ENCODE measurements at regions of chr5 and their contacts with region 1.

Region 1: DNA sequence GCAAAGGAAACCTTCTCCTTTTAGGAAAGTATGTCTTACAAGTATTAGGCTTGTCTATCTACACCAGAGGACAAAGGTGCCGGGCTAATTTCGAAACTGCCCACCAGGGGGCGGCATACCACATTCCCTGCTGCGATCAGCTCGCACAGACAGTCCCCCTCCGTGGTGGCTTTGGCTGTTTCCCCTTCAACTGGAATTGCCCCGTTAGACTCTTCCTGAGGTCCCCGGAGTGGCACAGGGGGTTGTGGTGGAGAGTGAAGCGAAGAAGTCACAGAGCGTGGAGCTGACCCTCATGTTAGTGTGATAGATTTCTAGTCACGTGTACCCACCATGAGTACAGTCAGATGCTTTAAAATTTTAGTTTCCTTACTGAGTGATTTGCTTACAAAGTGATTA is 17.5 kb downstream of the PTTG1 start:
- DNase-seq: peak; percentile 93
- ATAC-seq: peak; percentile 84
- H3K4me3 Mint-ChIP-seq: peak overlapping the region; percentile 66
- H3K27ac Mint-ChIP-seq: no peak overlapping the region
- H3K4me1 Mint-ChIP-seq: peaks cover 15% of the 10 kb centered on the region
- H3K27me3 Mint-ChIP-seq: no peaks in the 10 kb centered on the region
- CTCF ChIP-seq: peak; percentile 95

Region 2: DNA sequence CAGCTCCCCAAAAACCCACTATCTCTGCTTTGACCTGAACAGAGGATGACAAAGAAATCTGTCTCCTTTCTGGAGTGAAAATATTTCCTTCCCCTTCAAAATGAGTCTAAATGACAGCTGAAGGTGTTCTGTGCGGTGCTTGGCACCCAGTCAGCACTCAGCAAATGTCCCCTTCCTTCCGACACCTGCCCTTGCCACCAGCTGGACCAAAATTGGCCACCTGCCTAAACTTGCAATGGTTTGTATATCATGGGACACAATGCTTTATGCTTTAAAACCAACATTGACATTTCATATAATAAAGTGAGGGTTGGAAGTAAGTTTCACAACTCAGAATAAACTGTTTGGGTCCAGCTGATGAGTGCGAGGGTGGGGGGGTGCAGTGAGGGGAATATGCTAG is 437.7 kb before region 1 on chr5:
- CTCF ChIA-PET with region 1: no interaction called
- POLR2A ChIA-PET with region 1: no interaction called
- DNase-seq: no peak
- ATAC-seq: no peak
- H3K4me3 Mint-ChIP-seq: no peak overlapping the region
- H3K27ac Mint-ChIP-seq: 0 out of 2 replicates have a peak overlapping the region, but pooled peaks have one; percentile 52
- H3K4me1 Mint-ChIP-seq: no peaks in the 10 kb centered on the region
- H3K27me3 Mint-ChIP-seq: 0 out of 2 replicates have a peak, but pooled peaks cover 3% of the 10 kb centered on the region
- CTCF ChIP-seq: no peak

Region 3: DNA sequence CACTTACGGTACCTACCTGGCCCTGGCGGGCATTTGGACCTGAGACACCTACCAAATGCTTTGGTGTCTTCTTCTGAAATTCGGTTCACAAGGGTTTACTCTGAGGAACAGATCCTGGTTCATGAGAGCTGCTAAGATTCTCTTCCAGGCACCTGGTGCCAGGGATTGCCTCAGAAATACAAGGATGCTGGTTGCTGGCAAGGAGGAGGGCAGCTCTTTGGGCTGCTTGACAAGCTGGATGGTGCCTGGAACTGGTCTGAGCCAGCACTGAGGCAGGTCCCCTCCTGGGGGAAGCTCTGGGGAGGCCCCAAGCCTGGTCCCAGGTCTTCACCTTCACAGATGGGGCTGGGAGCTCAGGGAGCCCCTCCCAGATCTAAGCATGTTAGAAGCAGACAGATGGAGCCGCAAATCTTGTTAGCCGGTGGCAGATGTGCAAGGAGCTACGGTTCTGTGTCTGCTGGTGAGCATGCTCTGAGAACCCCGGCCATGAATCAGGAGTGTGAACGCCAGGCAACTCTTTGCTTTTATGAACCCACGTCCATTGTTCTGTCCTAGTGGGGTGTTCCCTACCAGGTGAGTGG is 193.6 kb before region 1 on chr5:
- CTCF ChIA-PET with region 1: no interaction called
- POLR2A ChIA-PET with region 1: no interaction called
- DNase-seq: no peak
- ATAC-seq: 0 out of 2 replicates have a peak, but pooled peaks have one; percentile 8
- H3K4me3 Mint-ChIP-seq: no peak overlapping the region
- H3K27ac Mint-ChIP-seq: no peak overlapping the region
- H3K4me1 Mint-ChIP-seq: peaks cover 11% of the 10 kb centered on the region
- H3K27me3 Mint-ChIP-seq: no peaks in the 10 kb centered on the region
- CTCF ChIP-seq: no peak

Region 4: DNA sequence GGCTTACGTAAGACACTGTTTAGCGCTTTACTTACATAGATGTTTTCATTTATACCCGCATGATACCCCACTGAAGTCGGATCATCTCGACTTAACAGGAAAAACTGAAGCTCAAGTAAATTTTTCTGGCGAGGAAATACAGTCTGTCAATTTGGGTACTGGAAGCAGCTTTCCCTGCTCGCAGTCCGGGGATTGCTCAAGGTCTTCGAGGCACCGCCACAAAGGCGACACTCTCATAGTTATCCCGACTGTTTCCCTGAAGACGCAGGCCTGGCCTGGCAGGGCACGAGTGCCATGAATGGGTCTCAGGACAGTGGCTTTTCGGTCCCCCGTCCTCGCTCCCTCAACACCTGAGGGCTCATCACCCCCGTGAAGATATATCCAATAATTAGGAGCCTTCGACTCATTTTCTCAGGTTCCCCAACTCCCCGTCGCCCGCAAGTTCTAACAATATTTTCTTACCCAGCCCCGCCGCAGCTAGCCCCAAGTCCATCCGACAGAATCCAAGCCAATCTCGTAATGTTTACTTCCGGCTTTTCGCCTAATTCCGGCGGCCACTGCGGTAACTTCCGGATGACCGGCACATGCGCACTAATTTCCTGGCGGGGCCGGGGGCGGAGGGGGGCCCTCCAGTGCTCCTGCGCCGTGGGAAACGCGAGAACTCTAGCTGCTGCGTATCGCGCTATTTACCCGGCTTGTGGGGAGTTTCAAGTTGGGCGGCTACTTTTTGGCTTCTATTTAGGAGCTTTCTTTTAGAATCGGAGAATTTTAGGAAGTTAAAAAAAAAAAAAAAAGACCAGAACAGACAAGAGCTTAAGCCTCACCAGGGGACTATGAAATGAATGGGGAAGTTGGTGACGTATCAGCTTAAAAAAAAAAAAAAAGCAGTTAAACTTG is 20.4 kb before region 1 on chr5 and contains the start of gene SLU7:
- CTCF ChIA-PET with region 1: interaction called, 26 read pairs
- POLR2A ChIA-PET with region 1: interaction called, 3 read pairs
- DNase-seq: peak; percentile 94
- ATAC-seq: peak; percentile 80
- H3K4me3 Mint-ChIP-seq: peak within 1 kb of the TSS; percentile 98
- H3K27ac Mint-ChIP-seq: peak within 1 kb of the TSS; percentile 96
- H3K4me1 Mint-ChIP-seq: peaks cover 42% of the 10 kb centered on the region
- H3K27me3 Mint-ChIP-seq: no peaks in the 10 kb centered on the region
- CTCF ChIP-seq: no peak
- total RNA-seq, gene SLU7: 28.7 to 33.3 TPM (median 32.5 TPM) in 3 replicates

Region 5: DNA sequence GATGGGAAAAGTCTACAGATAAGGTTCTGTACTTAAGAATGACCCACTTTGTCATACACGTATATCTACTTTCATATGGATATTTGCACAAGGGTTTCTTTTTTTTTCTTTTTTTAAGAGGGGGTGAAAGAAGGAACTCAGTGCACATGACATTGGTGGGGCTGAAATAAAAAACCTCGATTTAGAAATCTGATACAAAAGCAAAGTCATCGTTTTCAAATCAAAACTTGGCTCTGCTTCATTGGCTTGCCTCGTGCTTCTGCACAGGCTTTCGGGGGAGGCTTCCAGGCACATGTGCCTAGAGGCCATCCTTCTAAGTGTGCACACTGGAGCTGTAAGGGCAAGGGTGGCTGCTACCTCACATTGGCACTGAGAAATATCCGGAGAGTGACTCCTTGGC is 13.6 kb after region 1 on chr5:
- CTCF ChIA-PET with region 1: interaction called, 18 read pairs
- POLR2A ChIA-PET with region 1: no interaction called
- DNase-seq: no peak
- ATAC-seq: no peak
- H3K4me3 Mint-ChIP-seq: no peak overlapping the region
- H3K27ac Mint-ChIP-seq: no peak overlapping the region
- H3K4me1 Mint-ChIP-seq: no peaks in the 10 kb centered on the region
- H3K27me3 Mint-ChIP-seq: no peaks in the 10 kb centered on the region; the same call in 1 of the 2 replicates
- CTCF ChIP-seq: no peak

Region 6: DNA sequence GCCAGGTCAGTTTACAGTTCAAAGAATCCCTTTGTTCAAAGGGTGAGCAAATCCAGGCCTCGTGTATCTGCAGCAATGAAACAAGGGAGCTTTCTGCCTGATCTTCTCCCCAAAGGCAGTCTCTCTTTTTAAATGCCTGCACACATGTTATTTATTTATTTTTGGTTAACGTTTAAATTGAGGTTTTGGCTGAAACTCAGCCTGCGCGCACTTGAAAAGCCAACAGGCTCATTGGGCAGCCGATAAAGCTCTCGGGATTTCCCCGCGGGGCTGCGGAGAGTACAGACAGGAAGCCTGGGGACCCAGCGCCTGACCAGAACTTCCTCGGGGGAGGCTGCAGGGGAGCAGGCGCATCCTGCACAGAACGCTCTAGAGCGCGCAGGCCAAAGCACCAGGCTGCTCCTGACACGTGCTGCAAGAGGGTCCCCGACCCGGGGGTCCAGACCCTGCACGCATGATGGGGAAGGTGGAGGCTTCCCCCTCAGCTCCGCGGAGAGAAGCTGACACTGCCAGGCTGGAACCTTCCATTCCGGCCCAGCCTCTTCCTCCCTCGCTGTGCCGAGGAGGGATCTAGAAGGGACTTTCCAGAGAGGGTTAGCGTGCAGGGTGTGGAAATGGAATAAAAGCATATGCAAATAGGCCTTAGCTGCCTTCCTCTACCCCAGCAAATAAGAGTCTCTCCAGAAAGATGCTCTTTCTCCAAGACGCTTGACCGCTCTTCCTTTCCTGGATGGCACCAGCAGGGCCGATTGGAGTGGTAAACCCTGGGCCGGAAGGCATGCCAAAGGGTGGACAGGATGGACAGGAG is 28.6 kb after region 1 on chr5:
- CTCF ChIA-PET with region 1: interaction called, 28 read pairs
- POLR2A ChIA-PET with region 1: no interaction called
- DNase-seq: peak; percentile 57
- ATAC-seq: peak; percentile 89
- H3K4me3 Mint-ChIP-seq: no peak overlapping the region; the same call in 1 of the 2 replicates
- H3K27ac Mint-ChIP-seq: no peak overlapping the region
- H3K4me1 Mint-ChIP-seq: peaks cover 37% of the 10 kb centered on the region
- H3K27me3 Mint-ChIP-seq: no peaks in the 10 kb centered on the region; the same call in 1 of the 2 replicates
- CTCF ChIP-seq: no peak

Region 7: GRCh38 chr5:160500786-160501779 is 61.9 kb after region 1 on chr5:
- CTCF ChIA-PET with region 1: interaction called, 75 read pairs
- POLR2A ChIA-PET with region 1: no interaction called
- DNase-seq: no peak
- ATAC-seq: no peak
- H3K4me3 Mint-ChIP-seq: no peak overlapping the region
- H3K27ac Mint-ChIP-seq: no peak overlapping the region
- H3K4me1 Mint-ChIP-seq: peaks cover 14% of the 10 kb centered on the region
- H3K27me3 Mint-ChIP-seq: no peaks in the 10 kb centered on the region
- CTCF ChIP-seq: no peak

Region 8: GRCh38 chr5:160516696-160517510 is 77.7 kb after region 1 on chr5:
- CTCF ChIA-PET with region 1: interaction called, 26 read pairs
- POLR2A ChIA-PET with region 1: no interaction called
- DNase-seq: no peak
- ATAC-seq: no peak
- H3K4me3 Mint-ChIP-seq: no peak overlapping the region
- H3K27ac Mint-ChIP-seq: no peak overlapping the region
- H3K4me1 Mint-ChIP-seq: peaks cover 11% of the 10 kb centered on the region
- H3K27me3 Mint-ChIP-seq: no peaks in the 10 kb centered on the region
- CTCF ChIP-seq: no peak

Region 9: GRCh38 chr5:160787240-160787639 is 348.0 kb after region 1 on chr5:
- CTCF ChIA-PET with region 1: interaction called, 14 read pairs
- POLR2A ChIA-PET with region 1: no interaction called
- DNase-seq: peak; percentile 59
- ATAC-seq: peak; percentile 96
- H3K4me3 Mint-ChIP-seq: no peak overlapping the region
- H3K27ac Mint-ChIP-seq: no peak overlapping the region
- H3K4me1 Mint-ChIP-seq: peaks cover 14% of the 10 kb centered on the region
- H3K27me3 Mint-ChIP-seq: no peaks in the 10 kb centered on the region; the same call in none of the 2 replicates
- CTCF ChIP-seq: no peak; the same call in 1 of the 2 replicates

Measured in WTC11 (cell line).